Right cardiac atrium (tissue), 5 donors: ENCODE measurements at regions of chr16 and their contacts with region 1.

Region 1: GRCh38 chr16:84925092-84925772 is 86.1 kb downstream of the ZDHHC7 start:
- DNase-seq: peak; percentile 66 to 87 (median 84)
- ATAC-seq: no peak
- H3K4me3 ChIP-seq: no peak overlapping the region
- H3K27ac ChIP-seq: no peak overlapping the region
- H3K4me1 ChIP-seq: peaks cover 8% of the 10 kb centered on the region
- H3K27me3 ChIP-seq: no peaks in the 10 kb centered on the region

Region 2: DNA sequence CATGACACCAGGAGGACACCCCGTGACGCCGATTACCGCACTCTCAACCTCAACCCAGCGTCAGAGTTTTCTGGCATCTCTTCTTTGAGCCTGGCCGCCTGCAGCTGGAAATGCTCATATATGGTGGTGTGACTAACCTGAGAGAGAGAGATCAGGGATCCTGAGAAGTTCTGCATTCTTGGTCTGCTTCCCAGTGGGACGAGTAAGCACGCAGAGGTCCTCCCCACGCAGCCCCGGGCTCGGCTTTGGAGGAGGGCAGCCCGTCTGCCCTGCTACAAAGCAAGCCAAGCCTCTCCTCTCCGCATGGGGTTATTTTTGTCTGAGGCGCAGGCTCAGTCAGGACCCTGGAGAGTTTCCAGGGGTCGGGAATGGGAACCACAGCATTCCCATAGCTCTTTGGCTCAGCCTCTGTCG is 89.0 kb before region 1 on chr16:
- intact Hi-C with region 1: loop called in 2 of 4 experiments (anchors 10 kb)
- DNase-seq: peak; percentile 85 to 90 (median 89)
- ATAC-seq: peak; percentile 74
- H3K4me3 ChIP-seq: no peak overlapping the region
- H3K27ac ChIP-seq: peak overlapping the region; percentile 73
- H3K4me1 ChIP-seq: peaks cover 6% of the 10 kb centered on the region
- H3K27me3 ChIP-seq: no peaks in the 10 kb centered on the region

Region 3: DNA sequence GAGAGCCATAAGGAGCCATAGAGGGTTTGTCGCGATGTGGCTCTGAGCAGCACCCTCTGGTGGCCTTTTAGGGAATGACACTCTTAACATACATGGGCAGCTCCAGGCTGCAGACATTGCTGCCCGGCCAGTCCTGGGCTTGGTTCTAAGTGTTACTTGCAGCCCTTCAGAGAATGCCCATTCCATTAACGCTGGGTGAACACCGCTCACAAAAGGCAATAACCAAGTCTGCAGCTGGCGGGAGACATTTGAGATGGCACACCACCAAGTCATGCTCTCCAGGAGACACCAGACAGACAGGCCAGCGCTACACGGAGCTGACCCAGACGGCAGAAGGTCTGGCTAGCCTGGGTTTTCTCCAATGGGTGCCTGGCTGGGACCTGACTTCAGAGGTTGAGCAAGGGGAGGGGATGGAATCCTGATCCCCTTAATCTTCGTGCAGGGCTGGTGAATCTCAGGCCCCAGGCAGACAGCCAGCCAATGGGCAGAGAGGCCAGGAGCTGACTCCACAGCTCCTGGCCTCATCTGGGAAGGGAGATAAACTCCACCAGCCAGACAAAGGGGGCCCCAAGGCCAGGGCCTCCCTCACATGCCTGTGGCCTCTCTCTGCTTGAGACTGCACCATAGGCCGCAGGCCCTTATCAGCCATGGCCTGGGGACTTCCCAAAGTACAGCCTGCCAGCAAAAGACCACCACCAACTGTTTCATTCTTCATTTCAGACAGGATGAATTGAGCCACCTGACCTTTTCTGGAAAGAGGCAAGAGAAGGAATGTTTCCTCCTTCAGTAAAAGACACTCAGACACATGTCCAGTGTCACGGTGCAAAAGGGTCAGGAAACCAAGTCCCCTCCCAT is 27.3 kb after region 1 on chr16:
- intact Hi-C with region 1: loop called in 1 of 4 experiments (anchors 2 kb)
- DNase-seq: peak; percentile 64 to 86 (median 84)
- ATAC-seq: peak; percentile 89 to 93
- H3K4me3 ChIP-seq: no peak overlapping the region
- H3K27ac ChIP-seq: peak overlapping the region; percentile 57
- H3K4me1 ChIP-seq: peaks cover 4% of the 10 kb centered on the region
- H3K27me3 ChIP-seq: no peaks in the 10 kb centered on the region

Region 4: GRCh38 chr16:84970447-84971127 is 45.4 kb after region 1 on chr16:
- intact Hi-C with region 1: loop called in 1 of 4 experiments (anchors 2 kb)
- DNase-seq: peak; percentile 83 to 92 (median 91)
- ATAC-seq: peak; percentile 80 to 82
- H3K4me3 ChIP-seq: no peak overlapping the region
- H3K27ac ChIP-seq: no peak overlapping the region
- H3K4me1 ChIP-seq: peaks cover 3% of the 10 kb centered on the region
- H3K27me3 ChIP-seq: no peaks in the 10 kb centered on the region